MCF 10A (cell line): ENCODE measurements at regions of chr9 and their contacts with region 1.

Region 1: DNA sequence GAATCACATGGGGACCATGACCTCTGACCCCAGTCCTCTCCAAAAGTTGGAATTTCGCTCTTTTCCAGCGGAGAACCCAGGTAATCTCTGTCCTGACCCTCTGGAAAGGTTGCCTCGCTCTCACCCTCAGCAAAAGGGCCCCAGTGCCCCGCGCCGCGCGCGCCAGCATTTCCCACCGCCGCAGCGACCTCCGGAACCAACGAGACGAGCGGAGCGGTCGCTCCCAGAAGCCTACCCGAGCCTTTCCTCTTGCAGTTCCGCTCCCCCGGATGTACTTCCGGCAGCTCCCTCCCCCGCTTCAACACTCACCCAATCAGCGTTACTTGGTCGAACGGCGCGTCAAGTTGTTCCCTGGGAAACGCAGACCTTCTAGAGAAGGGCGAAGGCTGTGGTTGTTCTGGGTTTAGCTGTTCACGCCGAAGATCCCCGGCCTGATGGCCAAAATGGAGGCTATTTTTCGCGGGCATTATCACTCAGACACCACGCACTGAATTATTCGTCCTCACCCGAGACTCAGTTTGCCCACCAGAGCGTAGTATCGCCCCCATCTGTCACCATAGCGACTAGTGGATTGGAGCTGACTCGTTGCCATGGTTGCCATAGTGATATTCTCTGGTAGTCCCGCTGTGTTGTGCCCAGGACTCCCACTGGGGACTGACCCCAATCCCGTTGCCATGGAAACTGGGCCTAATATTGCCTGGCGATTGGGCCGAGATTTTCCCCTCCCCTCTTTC is at the start of gene STOML2:
- DNase-seq: peak; percentile 95
- H3K4me3 Mint-ChIP-seq: peak within 1 kb of the TSS; percentile 99
- H3K27ac Mint-ChIP-seq: peak within 1 kb of the TSS; percentile 99
- H3K4me1 Mint-ChIP-seq: peaks cover 19% of the 10 kb centered on the region
- H3K27me3 Mint-ChIP-seq: no peaks in the 10 kb centered on the region
- CTCF ChIP-seq: no peak
- total RNA-seq, gene STOML2: 203 and 209 TPM in 2 replicates

Region 2: DNA sequence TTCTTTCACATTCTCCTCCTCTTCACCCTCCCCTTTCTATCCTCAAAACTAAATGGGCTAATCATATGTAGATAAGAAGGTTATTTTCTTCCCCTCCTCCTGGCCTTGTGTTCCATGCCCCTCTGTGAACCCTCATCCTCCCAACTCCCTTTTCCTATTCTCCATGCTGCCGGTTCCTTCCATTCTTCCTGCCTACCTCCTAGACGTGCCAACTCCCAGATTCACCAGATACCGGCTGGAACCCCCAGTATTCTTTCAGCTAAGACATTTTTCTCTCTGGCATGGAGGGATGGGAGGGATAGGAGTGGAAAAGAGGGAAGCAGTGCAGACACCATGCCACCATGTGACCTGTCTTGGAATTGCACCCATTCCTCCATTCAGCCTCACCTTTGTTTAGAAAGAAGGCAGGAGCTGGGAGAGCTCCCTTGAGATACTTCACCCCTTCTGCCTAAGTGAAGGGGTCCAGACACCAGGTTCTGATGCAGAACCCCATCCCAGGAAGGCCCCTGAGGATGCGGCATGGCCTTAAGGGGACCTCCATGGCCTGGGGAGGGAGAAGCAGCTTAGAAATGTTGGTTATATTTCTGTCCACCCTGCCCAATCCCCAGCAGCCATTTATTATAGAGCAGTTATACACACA is 108.7 kb before region 1 on chr9:
- CTCF ChIA-PET with region 1: no interaction called
- POLR2A ChIA-PET with region 1: no interaction called
- intact Hi-C with region 1: loop called (anchors 1 kb)
- DNase-seq: peak; percentile 77
- H3K4me3 Mint-ChIP-seq: no peak overlapping the region
- H3K27ac Mint-ChIP-seq: no peak overlapping the region
- H3K4me1 Mint-ChIP-seq: peaks cover 38% of the 10 kb centered on the region
- H3K27me3 Mint-ChIP-seq: no peaks in the 10 kb centered on the region
- CTCF ChIP-seq: peak; percentile 76

Region 3: GRCh38 chr9:35406183-35406956 is 303.3 kb after region 1 on chr9:
- CTCF ChIA-PET with region 1: no interaction called
- POLR2A ChIA-PET with region 1: no interaction called
- intact Hi-C with region 1: no loop called
- DNase-seq: no peak
- H3K4me3 Mint-ChIP-seq: no peak overlapping the region
- H3K27ac Mint-ChIP-seq: peak overlapping the region; percentile 17
- H3K4me1 Mint-ChIP-seq: no peaks in the 10 kb centered on the region
- H3K27me3 Mint-ChIP-seq: no peaks in the 10 kb centered on the region
- CTCF ChIP-seq: no peak